GM12878 (cell line): ENCODE measurements at regions of chr1 and their contacts with region 1.

Region 1: DNA sequence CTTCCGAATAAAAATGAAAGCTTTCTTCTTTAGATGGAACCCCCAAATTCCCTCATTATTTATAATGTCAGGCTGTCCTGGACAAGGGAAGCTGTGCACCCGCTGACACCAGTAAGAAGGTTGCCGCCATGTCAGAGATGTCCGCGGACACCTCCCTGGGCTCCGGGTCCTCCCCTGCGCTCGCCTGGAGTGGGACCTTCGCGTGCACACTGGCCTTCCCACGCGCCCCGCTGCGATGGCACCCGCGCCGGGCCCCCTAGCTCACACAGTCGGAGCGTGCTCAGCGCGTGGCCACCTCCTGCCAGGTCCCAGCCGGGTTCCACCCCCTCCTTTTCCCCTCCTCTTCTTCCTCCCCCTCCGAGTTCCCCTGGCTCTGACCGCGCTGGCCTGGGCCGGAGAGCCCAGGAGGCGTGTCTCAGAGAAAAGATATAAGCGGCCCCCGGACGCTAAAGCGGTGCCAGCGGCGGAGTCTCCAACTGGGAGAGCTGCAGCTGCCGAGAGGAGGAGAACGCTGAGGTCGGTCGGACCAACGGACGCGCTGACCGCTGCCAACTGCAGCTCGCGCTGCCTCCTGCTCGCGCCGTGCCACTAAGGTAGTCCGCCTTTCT is at the start of gene G0S2:
- DNase-seq: no peak
- ATAC-seq: peak; percentile 55
- H3K4me3 ChIP-seq: no peak within 1 kb of the TSS
- H3K27ac ChIP-seq: no peak within 1 kb of the TSS
- H3K4me1 ChIP-seq: peaks cover 18% of the 10 kb centered on the region
- H3K27me3 ChIP-seq: peaks cover 0 to 3% of the 10 kb centered on the region in 2 experiments; a peak in 3 of 4 replicates
- CTCF ChIP-seq: no peak
- EP300 ChIP-seq: no peak
- POLR2A ChIP-seq: no peak
- RAD21 ChIP-seq: no peak
- polyA plus RNA-seq, gene G0S2: 0.07 to 0.08 TPM

Region 2: GRCh38 chr1:207828485-207829158 is 1846.4 kb before region 1 on chr1:
- CTCF ChIA-PET with region 1: no interaction called
- POLR2A ChIA-PET with region 1: no interaction called
- RAD21 ChIA-PET with region 1: no interaction called
- SMC1A ChIA-PET with region 1: no interaction called
- in situ Hi-C with region 1: no loop called
- intact Hi-C with region 1: loop called (anchors 10 kb)
- DNase-seq: peak; percentile 81
- ATAC-seq: peak; percentile 37
- H3K4me3 ChIP-seq: no peak overlapping the region
- H3K27ac ChIP-seq: peak overlapping the region; percentile 10
- H3K4me1 ChIP-seq: peaks cover 64% of the 10 kb centered on the region
- H3K27me3 ChIP-seq: no peaks in the 10 kb centered on the region
- CTCF ChIP-seq: peak; percentile 83 to 95 (median 93)
- EP300 ChIP-seq: no peak
- POLR2A ChIP-seq: no peak
- RAD21 ChIP-seq: peak; percentile 96

Region 3: DNA sequence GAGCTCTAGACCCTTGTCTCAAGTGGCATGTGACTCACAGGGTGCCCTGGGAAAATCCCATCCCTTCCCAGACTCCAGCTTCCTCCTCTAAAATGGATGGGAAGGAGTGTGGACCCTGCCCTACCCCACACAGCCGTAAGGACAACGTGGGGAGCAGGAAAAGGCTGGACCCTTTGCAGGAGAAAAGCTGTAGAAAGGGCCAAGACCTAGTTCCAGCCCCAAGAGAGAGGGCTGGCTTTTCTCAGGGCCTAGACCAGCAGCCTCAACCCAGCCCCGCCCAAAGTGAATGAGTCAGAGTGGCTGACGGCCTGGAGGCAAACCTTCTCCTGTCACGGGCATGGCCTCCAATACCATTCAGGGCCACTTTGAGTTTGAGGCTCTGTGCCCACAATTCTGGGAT is 23.9 kb before region 1 on chr1:
- CTCF ChIA-PET with region 1: interaction called, 58 read pairs
- POLR2A ChIA-PET with region 1: interaction called, 95 read pairs
- RAD21 ChIA-PET with region 1: interaction called, 195 read pairs
- SMC1A ChIA-PET with region 1: interaction called, 261 read pairs
- in situ Hi-C with region 1: no loop called
- intact Hi-C with region 1: loop called (anchors 2 kb)
- DNase-seq: no peak
- ATAC-seq: peak; percentile 78
- H3K4me3 ChIP-seq: no peak overlapping the region
- H3K27ac ChIP-seq: no peak overlapping the region
- H3K4me1 ChIP-seq: peaks cover 23% of the 10 kb centered on the region
- H3K27me3 ChIP-seq: no peaks in the 10 kb centered on the region
- CTCF ChIP-seq: no peak
- EP300 ChIP-seq: no peak
- POLR2A ChIP-seq: no peak
- RAD21 ChIP-seq: no peak

Region 4: GRCh38 chr1:209685821-209686220 is 10.8 kb after region 1 on chr1:
- CTCF ChIA-PET with region 1: interaction called, 33 read pairs
- POLR2A ChIA-PET with region 1: interaction called, 14 read pairs
- RAD21 ChIA-PET with region 1: interaction called, 38 read pairs
- SMC1A ChIA-PET with region 1: interaction called, 117 read pairs
- in situ Hi-C with region 1: no loop called
- intact Hi-C with region 1: no loop called
- DNase-seq: no peak
- ATAC-seq: peak; percentile 88
- H3K4me3 ChIP-seq: no peak overlapping the region
- H3K27ac ChIP-seq: no peak overlapping the region
- H3K4me1 ChIP-seq: no peaks in the 10 kb centered on the region
- H3K27me3 ChIP-seq: no peaks in the 10 kb centered on the region
- CTCF ChIP-seq: no peak
- EP300 ChIP-seq: no peak
- POLR2A ChIP-seq: no peak
- RAD21 ChIP-seq: no peak

Region 5: DNA sequence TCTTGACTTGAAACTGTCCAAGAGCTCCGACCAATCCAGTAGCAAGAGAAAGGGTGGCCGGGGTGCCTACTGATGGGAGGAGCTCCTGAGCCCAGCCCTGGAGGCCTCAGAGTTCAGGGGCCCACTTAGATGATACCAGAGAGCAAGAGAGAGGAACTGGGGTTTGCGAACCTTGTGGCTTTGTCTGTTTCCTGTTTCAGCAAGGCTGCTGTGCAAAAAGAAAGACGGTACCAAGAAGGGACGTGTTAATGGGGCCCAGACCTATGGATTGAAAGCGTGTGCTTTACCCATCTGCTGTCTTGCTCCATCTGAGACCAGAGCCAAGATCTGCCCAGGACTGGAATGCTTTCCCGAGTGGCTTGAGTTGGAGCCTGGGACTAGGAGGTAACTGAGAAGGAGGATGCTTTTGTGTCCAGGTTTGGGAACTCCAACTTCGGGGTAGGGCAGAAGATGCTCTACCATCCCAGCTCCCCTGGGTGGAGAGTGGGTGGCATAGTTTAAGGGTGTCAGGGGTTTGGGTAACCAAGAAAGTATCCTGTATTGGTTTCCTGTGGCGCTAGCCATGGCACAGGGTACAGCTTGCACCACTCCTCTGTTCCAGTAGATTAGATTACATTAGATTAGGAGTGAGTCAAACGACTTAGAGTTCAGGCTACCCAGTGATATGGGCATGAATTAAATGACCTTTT is 81.0 kb after region 1 on chr1 and contains the start of gene TRAF3IP3:
- CTCF ChIA-PET with region 1: interaction called, 42 read pairs
- POLR2A ChIA-PET with region 1: interaction called, 13 read pairs
- RAD21 ChIA-PET with region 1: interaction called, 8 read pairs
- SMC1A ChIA-PET with region 1: interaction called, 6 read pairs
- in situ Hi-C with region 1: no loop called
- intact Hi-C with region 1: no loop called
- DNase-seq: peak; percentile 83
- ATAC-seq: peak; percentile 86
- H3K4me3 ChIP-seq: peak within 1 kb of the TSS; percentile 73
- H3K27ac ChIP-seq: peak within 1 kb of the TSS; percentile 92
- H3K4me1 ChIP-seq: peaks cover 53% of the 10 kb centered on the region
- H3K27me3 ChIP-seq: no peaks in the 10 kb centered on the region
- CTCF ChIP-seq: no peak
- EP300 ChIP-seq: 0 out of 4 replicates have a peak, but pooled peaks of 1 of the 2 experiments have one; percentile 13
- POLR2A ChIP-seq: peak; percentile 84
- RAD21 ChIP-seq: no peak
- polyA plus RNA-seq, gene TRAF3IP3: 117 to 121 TPM

Region 6: DNA sequence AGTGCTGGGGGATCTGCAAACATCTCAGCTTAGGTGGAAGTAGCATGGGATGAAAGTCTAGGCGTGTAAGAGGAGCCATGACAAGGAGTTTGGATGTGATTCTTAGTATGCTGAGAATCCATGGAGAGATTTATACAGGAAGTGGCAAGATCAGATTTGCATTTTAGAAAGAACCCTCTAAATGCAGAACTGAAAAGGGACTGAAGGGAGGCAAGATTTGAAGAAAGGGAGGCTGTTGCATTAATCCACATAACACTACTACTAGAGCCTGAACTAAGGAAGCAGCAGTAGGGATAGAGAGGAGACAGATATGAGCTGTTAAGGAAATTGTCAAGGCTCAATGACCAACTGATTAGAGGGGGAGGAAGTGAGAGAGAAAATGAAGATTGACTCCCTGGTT is 99.5 kb after region 1 on chr1:
- CTCF ChIA-PET with region 1: no interaction called
- POLR2A ChIA-PET with region 1: interaction called, 3 read pairs
- RAD21 ChIA-PET with region 1: interaction called, 3 read pairs
- SMC1A ChIA-PET with region 1: interaction called, 11 read pairs
- in situ Hi-C with region 1: no loop called
- intact Hi-C with region 1: no loop called
- DNase-seq: peak; percentile 32
- ATAC-seq: peak; percentile 82
- H3K4me3 ChIP-seq: peak overlapping the region; percentile 6
- H3K27ac ChIP-seq: peak overlapping the region; percentile 60
- H3K4me1 ChIP-seq: peaks cover 42% of the 10 kb centered on the region
- H3K27me3 ChIP-seq: no peaks in the 10 kb centered on the region
- CTCF ChIP-seq: no peak
- EP300 ChIP-seq: no peak; a peak in 1 of 4 replicates
- POLR2A ChIP-seq: no peak
- RAD21 ChIP-seq: no peak